MCF 10A (cell line): ENCODE measurements at regions of chr3 and their contacts with region 1.

Region 1: GRCh38 chr3:96863129-96863740 is 48.8 kb downstream of the EPHA6 start:
- DNase-seq: peak; percentile 63
- H3K4me3 Mint-ChIP-seq: no peak overlapping the region
- H3K27ac Mint-ChIP-seq: no peak overlapping the region
- H3K4me1 Mint-ChIP-seq: no peaks in the 10 kb centered on the region
- H3K27me3 Mint-ChIP-seq: no peaks in the 10 kb centered on the region
- CTCF ChIP-seq: peak; percentile 76

Region 2: DNA sequence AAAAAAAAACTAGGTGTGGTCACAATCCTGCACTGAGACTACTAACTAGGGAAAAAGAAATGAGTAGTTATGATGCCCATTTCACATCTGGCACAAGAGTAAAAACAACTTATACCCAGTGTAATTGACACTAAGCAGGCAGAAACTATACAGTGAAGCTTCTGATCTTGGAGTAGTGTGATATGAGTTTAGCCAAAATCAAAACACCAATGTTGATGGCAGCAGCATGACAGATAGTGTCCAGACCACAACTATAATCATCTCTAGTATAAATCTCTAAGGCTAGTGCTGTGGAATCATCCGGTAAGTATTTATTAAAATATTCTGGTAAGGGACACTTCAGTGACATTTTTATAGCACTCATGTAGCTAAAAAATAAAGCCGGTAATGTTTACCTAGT is 157.3 kb before region 1 on chr3:
- CTCF ChIA-PET with region 1: no interaction called
- POLR2A ChIA-PET with region 1: no interaction called
- intact Hi-C with region 1: no loop called
- DNase-seq: no peak
- H3K4me3 Mint-ChIP-seq: no peak overlapping the region
- H3K27ac Mint-ChIP-seq: no peak overlapping the region
- H3K4me1 Mint-ChIP-seq: peaks cover 14% of the 10 kb centered on the region
- H3K27me3 Mint-ChIP-seq: no peaks in the 10 kb centered on the region
- CTCF ChIP-seq: no peak

Region 3: GRCh38 chr3:97021778-97022177 is 158.5 kb after region 1 on chr3:
- CTCF ChIA-PET with region 1: interaction called, 10 read pairs
- POLR2A ChIA-PET with region 1: no interaction called
- intact Hi-C with region 1: loop called (anchors 1 kb)
- DNase-seq: peak; percentile 11
- H3K4me3 Mint-ChIP-seq: no peak overlapping the region
- H3K27ac Mint-ChIP-seq: peak overlapping the region; percentile 71
- H3K4me1 Mint-ChIP-seq: peaks cover 10% of the 10 kb centered on the region
- H3K27me3 Mint-ChIP-seq: no peaks in the 10 kb centered on the region
- CTCF ChIP-seq: no peak

Region 4: DNA sequence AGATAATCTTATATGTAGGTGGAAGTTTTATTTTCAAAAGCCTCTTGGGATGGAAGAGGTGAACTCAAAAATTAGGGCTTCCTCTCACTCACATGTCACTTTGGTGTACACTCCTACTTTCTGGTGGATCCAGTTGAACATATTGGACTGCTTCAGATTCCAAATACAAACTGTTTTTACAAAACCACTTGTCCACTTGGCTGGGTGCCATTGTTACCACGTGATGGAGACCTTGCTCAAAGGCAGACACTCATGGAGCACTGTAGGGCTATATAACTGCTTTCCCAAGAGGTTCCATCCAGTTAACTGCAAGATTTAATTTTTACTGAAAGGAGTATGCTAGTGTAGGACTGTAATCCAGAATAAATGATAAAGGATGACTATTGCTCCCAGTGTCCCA is 258.2 kb after region 1 on chr3:
- CTCF ChIA-PET with region 1: no interaction called
- POLR2A ChIA-PET with region 1: no interaction called
- intact Hi-C with region 1: no loop called
- DNase-seq: no peak
- H3K4me3 Mint-ChIP-seq: no peak overlapping the region
- H3K27ac Mint-ChIP-seq: no peak overlapping the region
- H3K4me1 Mint-ChIP-seq: no peaks in the 10 kb centered on the region
- H3K27me3 Mint-ChIP-seq: no peaks in the 10 kb centered on the region
- CTCF ChIP-seq: no peak

Region 5: DNA sequence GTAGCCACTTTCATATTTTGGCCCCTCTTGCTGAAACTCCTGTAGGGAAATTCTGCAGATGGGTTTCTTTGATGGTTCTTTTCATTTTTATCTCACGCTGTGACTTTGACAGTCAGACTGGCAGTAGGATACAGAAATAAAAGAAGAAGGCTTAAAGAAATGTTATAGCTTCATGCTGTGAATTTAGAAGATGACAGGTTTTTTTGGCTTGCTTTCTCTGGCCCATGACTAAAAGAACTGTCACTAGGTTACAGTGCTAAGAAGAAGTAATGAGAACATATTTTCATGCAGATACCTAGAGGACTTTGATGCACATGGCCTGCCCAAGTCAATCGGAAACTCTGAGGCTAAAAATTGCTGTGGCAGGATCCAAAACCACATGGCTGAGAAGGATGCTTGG is 285.7 kb after region 1 on chr3:
- CTCF ChIA-PET with region 1: no interaction called
- POLR2A ChIA-PET with region 1: no interaction called
- intact Hi-C with region 1: loop called (anchors 10 kb)
- DNase-seq: no peak
- H3K4me3 Mint-ChIP-seq: no peak overlapping the region
- H3K27ac Mint-ChIP-seq: no peak overlapping the region
- H3K4me1 Mint-ChIP-seq: no peaks in the 10 kb centered on the region
- H3K27me3 Mint-ChIP-seq: no peaks in the 10 kb centered on the region
- CTCF ChIP-seq: no peak

Region 6: GRCh38 chr3:97658668-97659285 is 795.5 kb after region 1 on chr3:
- CTCF ChIA-PET with region 1: interaction called, 6 read pairs
- POLR2A ChIA-PET with region 1: no interaction called
- intact Hi-C with region 1: loop called (anchors 1 kb)
- DNase-seq: peak; percentile 48
- H3K4me3 Mint-ChIP-seq: no peak overlapping the region
- H3K27ac Mint-ChIP-seq: no peak overlapping the region
- H3K4me1 Mint-ChIP-seq: no peaks in the 10 kb centered on the region
- H3K27me3 Mint-ChIP-seq: peaks cover 62% of the 10 kb centered on the region
- CTCF ChIP-seq: peak; percentile 70

Region 7: DNA sequence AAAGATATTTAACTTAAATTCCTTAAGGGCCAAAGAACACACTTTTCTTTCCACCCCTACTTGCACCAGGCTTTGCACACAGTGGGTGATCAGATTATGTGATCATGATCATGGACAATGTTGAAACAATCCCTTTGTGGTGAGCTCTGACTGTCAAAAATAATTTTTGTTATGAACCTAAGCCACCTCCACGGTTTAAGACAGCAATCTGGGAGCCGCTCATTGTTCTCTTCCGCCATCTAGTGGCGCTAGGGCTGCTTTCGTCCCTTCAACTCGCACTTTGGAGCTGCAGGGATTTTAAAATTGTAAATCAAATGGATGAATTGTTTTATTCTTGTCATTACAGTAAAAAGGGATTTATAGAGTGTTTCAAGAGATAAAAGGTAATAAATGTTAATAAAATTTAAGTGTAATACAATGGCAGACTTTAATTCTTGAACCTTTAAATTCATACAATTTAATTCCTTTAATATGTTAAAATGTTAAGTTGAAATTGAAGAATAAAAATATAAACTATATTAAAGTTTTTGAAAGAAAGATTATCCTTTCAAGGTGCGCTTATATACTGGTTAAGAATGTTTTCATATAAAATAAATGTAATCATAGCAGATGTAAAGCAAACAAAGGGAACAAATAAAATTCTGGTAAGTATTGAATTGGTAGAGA is 856.1 kb after region 1 on chr3:
- CTCF ChIA-PET with region 1: interaction called, 20 read pairs
- POLR2A ChIA-PET with region 1: no interaction called
- intact Hi-C with region 1: loop called (anchors 2 kb)
- DNase-seq: peak; percentile 83
- H3K4me3 Mint-ChIP-seq: peak overlapping the region; percentile 28
- H3K27ac Mint-ChIP-seq: no peak overlapping the region
- H3K4me1 Mint-ChIP-seq: no peaks in the 10 kb centered on the region
- H3K27me3 Mint-ChIP-seq: peaks cover 10% of the 10 kb centered on the region
- CTCF ChIP-seq: peak; percentile 84